Activated naive CD4-positive, alpha-beta T cell treated with anti-CD3 and anti-CD28 coated beads for 36 hours (primary cell): ENCODE measurements at regions of chr6 and their contacts with region 1.

Region 1: DNA sequence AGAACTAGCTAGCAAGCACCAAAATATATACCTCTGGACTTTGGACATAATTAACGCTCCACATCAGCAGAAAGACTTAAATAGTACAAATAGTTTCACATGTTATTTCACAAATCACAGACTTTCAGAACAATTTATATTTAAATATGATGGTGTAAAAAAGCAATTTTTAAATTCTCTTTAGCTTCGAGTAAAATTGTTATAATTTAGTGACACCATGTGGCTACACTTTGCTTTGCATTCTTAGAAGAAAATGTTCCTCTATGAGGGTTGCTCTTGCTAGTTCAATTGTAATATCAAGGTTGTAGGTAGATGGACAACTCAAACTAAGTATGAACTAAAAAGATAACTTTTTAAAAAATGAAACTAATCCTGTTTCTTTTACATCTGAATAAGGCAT is 69.0 kb downstream of the BTBD9 start:
- DNase-seq: no peak
- H3K4me3 Mint-ChIP-seq: no peak overlapping the region
- H3K27ac Mint-ChIP-seq: no peak overlapping the region
- H3K4me1 Mint-ChIP-seq: peaks cover 23% of the 10 kb centered on the region
- H3K27me3 Mint-ChIP-seq: no peaks in the 10 kb centered on the region

Region 2: GRCh38 chr6:37499433-37500293 is 1071.1 kb before region 1 on chr6 and contains the start of gene CCDC167:
- CTCF ChIA-PET with region 1: no interaction called
- intact Hi-C with region 1: loop called (anchors 5 kb)
- DNase-seq: peak; percentile 99
- H3K4me3 Mint-ChIP-seq: peak within 1 kb of the TSS; percentile 98
- H3K27ac Mint-ChIP-seq: peak within 1 kb of the TSS; percentile 97
- H3K4me1 Mint-ChIP-seq: peaks cover 90% of the 10 kb centered on the region
- H3K27me3 Mint-ChIP-seq: no peaks in the 10 kb centered on the region
- total RNA-seq, gene CCDC167: 53.4 to 57.1 TPM

Region 3: GRCh38 chr6:37705239-37706051 is 865.3 kb before region 1 on chr6:
- CTCF ChIA-PET with region 1: interaction called, 10 read pairs
- intact Hi-C with region 1: no loop called
- DNase-seq: peak; percentile 71
- H3K4me3 Mint-ChIP-seq: peak overlapping the region; percentile 65
- H3K27ac Mint-ChIP-seq: peak overlapping the region; percentile 57
- H3K4me1 Mint-ChIP-seq: peaks cover 9% of the 10 kb centered on the region
- H3K27me3 Mint-ChIP-seq: no peaks in the 10 kb centered on the region

Region 4: GRCh38 chr6:38034274-38034914 is 536.4 kb before region 1 on chr6:
- CTCF ChIA-PET with region 1: interaction called, 4 read pairs
- intact Hi-C with region 1: loop called (anchors 10 kb)
- DNase-seq: peak; percentile 7
- H3K4me3 Mint-ChIP-seq: no peak overlapping the region
- H3K27ac Mint-ChIP-seq: no peak overlapping the region
- H3K4me1 Mint-ChIP-seq: peaks cover 51% of the 10 kb centered on the region
- H3K27me3 Mint-ChIP-seq: no peaks in the 10 kb centered on the region

Region 5: DNA sequence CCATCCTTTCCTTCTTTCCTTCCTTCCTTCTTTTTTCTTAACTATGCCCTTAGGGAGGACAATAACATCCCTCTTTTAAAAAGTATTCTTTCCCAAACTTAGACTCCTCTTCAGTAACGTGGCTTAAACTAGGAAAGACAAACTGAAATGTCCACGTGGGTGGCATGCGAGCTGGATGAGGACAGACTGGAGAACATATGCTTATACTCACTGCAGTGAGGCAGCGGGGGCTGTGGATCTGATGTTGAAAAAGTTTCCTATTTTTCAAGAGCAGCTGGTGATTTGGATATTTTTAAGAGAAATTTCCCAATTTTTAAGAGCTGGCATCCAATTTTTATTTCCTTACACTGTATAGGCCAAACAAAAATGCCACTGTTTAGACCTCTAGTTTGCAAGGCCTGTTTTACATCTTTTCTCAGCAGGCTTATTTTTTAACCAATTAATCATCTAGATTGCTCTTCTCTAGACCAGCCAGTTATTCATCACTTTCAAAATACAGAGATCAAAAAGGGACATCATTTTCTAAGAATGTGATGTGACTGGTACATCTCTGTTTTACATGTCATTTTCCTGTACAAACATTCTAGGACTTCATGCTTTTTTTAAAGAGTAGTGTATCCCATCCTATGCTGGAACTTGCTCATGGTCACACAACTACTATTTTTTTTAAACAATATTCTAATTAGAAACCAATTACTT is 157.5 kb before region 1 on chr6:
- CTCF ChIA-PET with region 1: interaction called, 4 read pairs
- intact Hi-C with region 1: loop called (anchors 5 kb)
- DNase-seq: peak; percentile 19
- H3K4me3 Mint-ChIP-seq: no peak overlapping the region
- H3K27ac Mint-ChIP-seq: peak overlapping the region; percentile 52
- H3K4me1 Mint-ChIP-seq: peaks cover 20% of the 10 kb centered on the region
- H3K27me3 Mint-ChIP-seq: no peaks in the 10 kb centered on the region

Region 6: DNA sequence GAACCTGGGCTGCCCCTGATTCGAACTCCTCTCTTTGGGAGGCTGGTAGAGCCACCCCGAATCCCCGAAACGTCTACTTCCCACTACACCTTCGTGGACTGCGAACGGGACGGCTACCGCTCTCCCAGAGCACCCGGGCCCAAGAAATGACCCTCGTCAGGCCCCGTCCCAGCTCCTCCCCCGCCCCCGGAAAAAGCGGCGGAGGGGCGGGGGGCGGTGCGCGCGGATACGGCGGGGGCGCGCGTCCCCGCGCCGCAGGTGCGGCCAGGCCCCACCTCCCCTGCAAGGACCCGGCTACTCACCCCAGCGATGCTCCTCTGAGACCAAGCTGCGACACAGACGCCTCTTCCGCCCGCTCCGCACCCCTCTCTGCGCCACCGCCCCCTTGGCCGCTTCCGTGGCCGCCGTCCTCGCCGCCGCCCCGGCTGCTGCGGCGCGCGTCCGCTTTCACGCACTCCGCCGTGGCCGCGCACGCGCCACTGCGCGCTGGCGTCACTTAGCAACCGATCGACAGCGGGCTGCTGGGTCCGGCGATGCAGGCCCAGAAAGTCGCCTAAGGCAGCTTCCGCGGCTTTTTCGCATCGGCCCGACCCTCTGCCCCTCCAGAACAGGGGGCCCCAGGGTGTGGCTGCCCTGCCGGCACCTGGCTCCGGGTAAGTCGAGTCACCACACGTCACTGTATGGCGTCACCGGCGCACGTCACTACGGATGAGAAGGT is 68.9 kb after region 1 on chr6 and contains the start of gene BTBD9:
- CTCF ChIA-PET with region 1: interaction called, 3 read pairs
- intact Hi-C with region 1: loop called (anchors 1 kb)
- DNase-seq: peak; percentile 79
- H3K4me3 Mint-ChIP-seq: peak within 1 kb of the TSS; percentile 89
- H3K27ac Mint-ChIP-seq: peak within 1 kb of the TSS; percentile 86
- H3K4me1 Mint-ChIP-seq: peaks cover 47% of the 10 kb centered on the region
- H3K27me3 Mint-ChIP-seq: no peaks in the 10 kb centered on the region
- total RNA-seq, gene BTBD9: 9.5 to 11.1 TPM